ENCODE measurements at regions of chr5 and their contacts with region 1.

Region 1: GRCh38 chr5:150640311-150641005 is at the start of gene SYNPO:
- DNase-seq: peak; percentile 75 to 88 (median 79)
- ATAC-seq: peak; percentile 20 to 73 (median 62)
- H3K4me3 ChIP-seq: peak within 1 kb of the TSS; percentile 10 to 70 (median 51)
- H3K27ac ChIP-seq: peak within 1 kb of the TSS; percentile 75 to 100 (median 96)
- H3K4me1 ChIP-seq: peaks cover 47 to 100% (median 90%) of the 10 kb centered on the region in 12 donors
- H3K27me3 ChIP-seq: no peaks in the 10 kb centered on the region
- CTCF ChIP-seq: peak in 5 of 12 donors; percentile 9 to 33 (median 13)
- POLR2A ChIP-seq: no peak
- total RNA-seq, gene SYNPO: 444 to 782 (median 590) TPM

Region 2: DNA sequence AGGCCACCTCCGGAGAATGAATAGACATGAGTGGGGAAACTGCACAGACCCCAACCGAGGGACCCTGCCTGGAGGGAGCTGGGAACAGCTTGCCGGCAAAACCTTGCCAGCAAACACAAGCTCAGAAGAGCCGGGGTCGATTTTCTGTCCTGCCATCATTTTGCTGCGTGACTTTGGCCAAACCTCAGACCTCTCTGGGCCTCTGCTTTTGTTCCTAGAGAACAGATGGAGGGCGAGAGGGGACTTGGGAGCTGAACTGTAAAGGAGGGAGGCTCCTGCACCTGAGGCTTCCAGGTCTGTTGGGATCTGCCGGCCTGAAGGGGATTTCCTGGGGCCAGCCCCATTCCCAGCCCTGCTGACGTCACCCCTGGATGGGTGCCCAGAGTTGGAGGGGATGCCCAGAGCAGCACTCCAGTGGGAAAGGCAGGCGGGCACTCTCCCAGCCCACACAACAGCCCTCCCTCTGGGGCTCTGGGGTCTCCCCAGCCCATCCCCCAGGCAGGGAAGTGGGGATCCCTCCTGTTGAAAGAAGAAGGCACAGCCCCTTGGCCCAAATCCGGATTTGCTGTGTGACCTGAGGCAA is 40.5 kb before region 1 on chr5:
- intact Hi-C with region 1: loop called in 2 of 10 experiments (anchors 2 to 5 kb)
- DNase-seq: peak; percentile 87 to 92 (median 91)
- ATAC-seq: peak; percentile 43 to 76 (median 52)
- H3K4me3 ChIP-seq: peak overlapping the region in 4 of 12 donors; percentile 2 to 41 (median 28)
- H3K27ac ChIP-seq: peak overlapping the region; percentile 44 to 90 (median 80)
- H3K4me1 ChIP-seq: peaks cover 19 to 90% (median 67%) of the 10 kb centered on the region in 12 donors
- H3K27me3 ChIP-seq: no peaks in the 10 kb centered on the region
- CTCF ChIP-seq: no peak
- POLR2A ChIP-seq: no peak

Region 3: DNA sequence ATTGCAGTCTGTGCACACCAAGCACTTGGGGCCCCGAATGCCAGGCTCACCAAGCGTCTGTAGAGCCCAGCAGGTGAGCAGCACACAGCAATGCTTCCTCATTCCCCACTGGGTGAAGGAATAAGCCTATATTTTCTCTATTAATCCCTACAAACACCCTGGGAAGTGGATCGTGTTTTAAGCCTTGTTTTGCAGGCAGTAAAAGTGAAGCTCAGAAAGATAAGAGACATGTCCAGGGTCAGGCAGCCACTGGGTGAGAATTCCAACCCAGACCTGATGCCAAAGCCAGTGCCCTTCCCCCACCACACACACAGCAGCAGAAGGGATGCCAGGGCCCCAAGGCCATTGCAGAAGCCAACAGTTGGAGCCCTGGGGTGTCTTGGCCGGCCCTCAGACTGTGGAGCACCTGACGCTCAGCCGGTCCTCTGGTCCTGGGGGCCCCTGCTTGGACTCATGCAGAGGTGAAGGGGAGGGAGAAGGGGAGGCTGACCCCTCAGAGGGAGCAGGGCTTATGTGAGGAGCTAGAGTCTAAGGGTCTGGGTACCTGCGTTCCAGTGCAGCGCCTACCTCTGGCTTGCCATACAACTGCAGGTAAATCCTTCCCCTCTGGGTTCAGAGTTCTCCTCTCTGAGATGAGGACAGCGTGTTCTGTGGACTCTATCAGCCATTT is 26.3 kb before region 1 on chr5:
- intact Hi-C with region 1: loop called in 2 of 10 experiments (anchors 5 kb)
- DNase-seq: peak in 3 of 5 donors; percentile 66 to 75 (median 67)
- ATAC-seq: peak in 1 of 4 donors; percentile 1
- H3K4me3 ChIP-seq: peak overlapping the region in 1 of 12 donors; percentile 16
- H3K27ac ChIP-seq: peak overlapping the region; percentile 82 to 100 (median 94)
- H3K4me1 ChIP-seq: peaks cover 42 to 100% (median 97%) of the 10 kb centered on the region in 12 donors
- H3K27me3 ChIP-seq: no peaks in the 10 kb centered on the region
- CTCF ChIP-seq: peak in 5 of 12 donors; percentile 22 to 34 (median 30)
- POLR2A ChIP-seq: no peak

Region 4: GRCh38 chr5:150624334-150625163 is 15.9 kb before region 1 on chr5:
- intact Hi-C with region 1: loop called in 2 of 10 experiments (anchors 2 kb)
- DNase-seq: peak in 4 of 5 donors; percentile 64 to 73 (median 68)
- ATAC-seq: peak in 3 of 4 donors; percentile 31 to 36 (median 34)
- H3K4me3 ChIP-seq: peak overlapping the region; percentile 52 to 99 (median 92)
- H3K27ac ChIP-seq: peak overlapping the region; percentile 93 to 100 (median 99)
- H3K4me1 ChIP-seq: peaks cover 12 to 90% (median 75%) of the 10 kb centered on the region in 12 donors
- H3K27me3 ChIP-seq: peaks cover 0 to 10% (median 0%) of the 10 kb centered on the region in 9 donors
- CTCF ChIP-seq: peak in 5 of 12 donors; percentile 11 to 48 (median 15)
- POLR2A ChIP-seq: no peak

Region 5: GRCh38 chr5:150671509-150672236 is 31.2 kb after region 1 on chr5:
- intact Hi-C with region 1: no loop called
- DNase-seq: peak in 3 of 5 donors; percentile 23 to 44 (median 39)
- ATAC-seq: peak in 3 of 4 donors; percentile 4 to 46 (median 12)
- H3K4me3 ChIP-seq: peak overlapping the region; percentile 46 to 73 (median 56)
- H3K27ac ChIP-seq: peak overlapping the region in 8 of 12 donors; percentile 23 to 90 (median 78)
- H3K4me1 ChIP-seq: peaks cover 6 to 48% (median 33%) of the 10 kb centered on the region in 12 donors
- H3K27me3 ChIP-seq: peaks cover 0 to 10% (median 0%) of the 10 kb centered on the region in 9 donors
- CTCF ChIP-seq: no peak
- POLR2A ChIP-seq: no peak

Measured in heart left ventricle (tissue), 16 donors.